ENCODE measurements at regions of chr2 and their contacts with region 1.

Region 1: GRCh38 chr2:219177552-219178376 is at the start of gene RETREG2:
- DNase-seq: peak; percentile 87
- H3K4me3 ChIP-seq: peak within 1 kb of the TSS; percentile 83 to 89 (median 86)
- H3K27ac ChIP-seq: peak within 1 kb of the TSS; percentile 92
- H3K4me1 ChIP-seq: peaks cover 28% of the 10 kb centered on the region
- H3K27me3 ChIP-seq: no peaks in the 10 kb centered on the region
- CTCF ChIP-seq: peak; percentile 22 to 38
- total RNA-seq, gene RETREG2: 56.1 to 73.5 TPM

Region 2: DNA sequence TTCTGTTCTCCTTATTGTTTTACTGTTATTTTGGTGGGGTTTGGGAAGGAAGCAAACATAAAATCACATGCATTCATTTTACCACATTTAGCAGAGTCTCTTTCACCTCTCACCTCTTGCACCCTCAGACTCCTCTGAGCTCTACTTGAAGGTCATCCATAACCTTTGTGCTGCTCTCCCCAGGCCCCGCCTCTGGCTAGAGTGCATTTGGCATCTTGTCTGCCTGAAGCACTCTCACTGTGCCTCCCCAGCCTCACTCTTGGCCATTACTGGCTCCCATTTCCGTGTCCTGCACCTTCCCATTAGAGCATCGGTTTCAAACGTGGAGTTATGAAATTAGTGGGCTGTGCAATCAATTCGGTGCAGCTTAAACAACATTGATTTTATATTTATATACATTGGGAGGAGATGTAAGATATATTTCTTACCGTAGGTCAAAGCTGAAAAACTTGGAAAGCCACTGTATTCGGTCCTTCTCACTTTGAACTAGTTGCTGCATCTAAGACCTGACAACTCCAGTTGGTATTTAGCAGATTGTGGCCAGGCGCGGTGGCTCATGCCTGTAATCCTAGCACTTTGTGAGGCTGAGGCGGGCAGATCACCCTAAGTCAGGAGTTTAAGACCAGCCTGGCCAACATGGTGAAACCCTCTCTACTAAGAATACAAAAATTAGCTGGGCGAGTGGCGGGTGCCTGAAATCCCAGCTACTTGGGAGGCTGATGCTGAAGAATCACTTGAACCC is 21.9 kb after region 1 on chr2:
- CTCF ChIA-PET with region 1: no interaction called
- dilution Hi-C with region 1: no loop called
- in situ Hi-C with region 1: no loop called
- intact Hi-C with region 1: loop called (anchors 2 kb)
- DNase-seq: no peak
- H3K4me3 ChIP-seq: no peak overlapping the region
- H3K27ac ChIP-seq: no peak overlapping the region
- H3K4me1 ChIP-seq: no peaks in the 10 kb centered on the region
- H3K27me3 ChIP-seq: no peaks in the 10 kb centered on the region
- CTCF ChIP-seq: no peak

Region 3: GRCh38 chr2:219218732-219219701 is 41.3 kb after region 1 on chr2 and contains the start of gene ABCB6:
- CTCF ChIA-PET with region 1: interaction called, 5 read pairs
- dilution Hi-C with region 1: no loop called
- in situ Hi-C with region 1: no loop called
- intact Hi-C with region 1: loop called (anchors 2 kb)
- DNase-seq: peak; percentile 57
- H3K4me3 ChIP-seq: peak within 1 kb of the TSS; percentile 12 to 54 (median 48)
- H3K27ac ChIP-seq: peak within 1 kb of the TSS; percentile 18
- H3K4me1 ChIP-seq: peaks cover 21% of the 10 kb centered on the region
- H3K27me3 ChIP-seq: no peaks in the 10 kb centered on the region
- CTCF ChIP-seq: no peak
- total RNA-seq, gene ABCB6: 9.6 to 15.7 TPM

Region 4: GRCh38 chr2:219245148-219245898 is 67.6 kb after region 1 on chr2 and contains the starts of genes GLB1L and STK16:
- CTCF ChIA-PET with region 1: no interaction called
- dilution Hi-C with region 1: loop called (anchors 5 kb)
- in situ Hi-C with region 1: no loop called
- intact Hi-C with region 1: loop called (anchors 1 kb)
- DNase-seq: peak; percentile 85
- H3K4me3 ChIP-seq: peak within 1 kb of the TSS; percentile 67 to 98 (median 82)
- H3K27ac ChIP-seq: peak within 1 kb of the TSS; percentile 88
- H3K4me1 ChIP-seq: peaks cover 46% of the 10 kb centered on the region
- H3K27me3 ChIP-seq: no peaks in the 10 kb centered on the region
- CTCF ChIP-seq: no peak
- total RNA-seq, gene GLB1L: 5.5 to 21.8 TPM
- total RNA-seq, gene STK16: 26.9 to 29.8 TPM

Region 5: DNA sequence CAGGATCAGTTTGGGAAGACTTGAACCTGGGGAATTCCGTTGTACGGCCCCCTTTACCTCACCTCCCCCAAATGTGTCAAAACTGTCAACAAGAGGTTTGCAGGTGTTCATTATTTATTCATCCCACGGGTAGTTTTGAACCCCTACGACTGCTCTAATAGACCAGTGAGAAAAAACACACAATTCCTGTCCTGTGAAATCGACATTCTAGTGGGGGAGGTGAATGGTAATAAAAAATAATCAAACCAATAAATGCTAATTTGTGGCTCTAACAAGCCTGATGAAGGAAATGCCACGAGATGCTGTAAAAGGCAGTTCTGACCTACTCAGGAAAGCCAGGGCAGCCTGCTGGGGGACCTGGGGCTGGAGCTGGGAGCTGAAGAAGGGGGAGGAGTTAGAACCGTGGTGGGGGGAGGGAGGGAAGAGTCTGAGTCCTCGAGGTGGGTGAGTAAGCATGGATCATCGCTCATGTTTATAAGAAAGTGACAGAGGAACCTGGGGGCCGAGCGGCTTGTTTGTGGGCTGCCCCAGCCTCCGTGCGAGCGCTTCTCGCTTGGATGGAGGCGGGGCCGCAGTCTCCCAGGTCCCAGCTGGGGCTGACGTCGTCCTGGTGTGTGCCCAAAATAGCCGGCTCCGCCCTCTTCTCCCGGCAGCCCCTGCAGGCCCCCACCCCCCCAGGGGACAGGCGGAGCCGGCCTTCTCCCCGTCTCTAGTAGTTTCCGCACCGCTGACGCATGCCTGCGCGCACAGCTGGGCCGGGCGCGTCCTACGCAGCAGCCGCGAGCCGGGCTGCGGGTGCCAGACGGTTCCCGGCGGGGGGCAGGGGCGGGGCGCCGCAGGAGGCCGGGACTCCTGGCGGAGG is 101.1 kb after region 1 on chr2 and contains the start of gene DNAJB2:
- CTCF ChIA-PET with region 1: no interaction called
- dilution Hi-C with region 1: no loop called
- in situ Hi-C with region 1: loop called in 1 of 2 experiments (anchors 10 kb)
- intact Hi-C with region 1: loop called (anchors 1 kb)
- DNase-seq: peak; percentile 99
- H3K4me3 ChIP-seq: peak within 1 kb of the TSS; percentile 62 to 70 (median 62)
- H3K27ac ChIP-seq: peak within 1 kb of the TSS; percentile 80
- H3K4me1 ChIP-seq: peaks cover 45% of the 10 kb centered on the region
- H3K27me3 ChIP-seq: no peaks in the 10 kb centered on the region
- CTCF ChIP-seq: no peak
- total RNA-seq, gene DNAJB2: 58.9 to 110 TPM